Heart right ventricle (tissue), 16 donors: ENCODE measurements at regions of chr21 and their contacts with region 1.

Region 1: GRCh38 chr21:46253610-46254124 is 25.1 kb upstream of the LSS start:
- DNase-seq: no peak
- ATAC-seq: no peak
- H3K4me3 ChIP-seq: no peak overlapping the region
- H3K27ac ChIP-seq: peak overlapping the region in 1 of 10 donors; percentile 20
- H3K4me1 ChIP-seq: peaks cover 0 to 26% (median 3%) of the 10 kb centered on the region in 9 donors
- H3K27me3 ChIP-seq: no peaks in the 10 kb centered on the region
- CTCF ChIP-seq: no peak

Region 2: DNA sequence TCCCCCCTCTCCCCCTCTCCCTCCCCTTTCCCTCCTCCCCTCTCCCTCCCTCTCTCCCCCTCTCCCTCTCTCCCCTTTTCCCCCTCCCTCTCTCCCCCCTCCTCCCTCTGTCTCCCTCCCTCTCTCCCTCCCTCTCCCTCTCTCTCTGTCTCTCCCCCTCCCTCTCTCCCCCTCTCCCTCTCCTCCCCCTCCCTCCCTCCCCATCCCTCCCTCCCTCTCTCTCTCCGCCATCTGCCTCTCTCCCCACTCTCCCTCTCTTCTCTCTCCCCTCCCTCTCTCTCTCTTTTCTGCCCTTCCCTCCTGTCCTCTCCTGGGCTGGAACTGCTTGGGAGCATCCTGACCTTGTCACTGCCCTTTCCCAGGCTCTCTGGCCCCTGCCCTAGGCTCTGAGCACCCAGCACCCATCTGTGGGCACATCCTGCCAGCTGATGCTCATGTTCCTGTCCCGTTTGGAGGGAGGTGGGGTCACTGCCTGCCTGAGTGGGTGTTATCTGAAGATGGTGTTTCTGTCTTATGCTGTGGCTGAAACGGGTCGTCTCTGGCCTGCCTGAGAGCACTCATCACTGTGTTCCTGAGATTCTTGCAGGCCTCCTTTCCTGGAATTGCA is 109.1 kb before region 1 on chr21:
- intact Hi-C with region 1: loop called in 2 of 10 experiments (anchors 5 to 10 kb)
- DNase-seq: peak in 1 of 2 donors; percentile 9
- ATAC-seq: no peak
- H3K4me3 ChIP-seq: no peak overlapping the region
- H3K27ac ChIP-seq: no peak overlapping the region
- H3K4me1 ChIP-seq: peaks cover 0 to 9% (median 5%) of the 10 kb centered on the region in 9 donors
- H3K27me3 ChIP-seq: no peaks in the 10 kb centered on the region
- CTCF ChIP-seq: no peak

Region 3: GRCh38 chr21:46307625-46308024 is 54.0 kb after region 1 on chr21:
- intact Hi-C with region 1: no loop called
- DNase-seq: no peak
- ATAC-seq: no peak
- H3K4me3 ChIP-seq: no peak overlapping the region
- H3K27ac ChIP-seq: no peak overlapping the region
- H3K4me1 ChIP-seq: no peaks in the 10 kb centered on the region
- H3K27me3 ChIP-seq: no peaks in the 10 kb centered on the region
- CTCF ChIP-seq: no peak